Activated CD8-positive, alpha-beta T cell treated with anti-CD3 and anti-CD28 coated beads for 36 hours (primary cell): ENCODE measurements at regions of chr17 and their contacts with region 1.

Region 1: DNA sequence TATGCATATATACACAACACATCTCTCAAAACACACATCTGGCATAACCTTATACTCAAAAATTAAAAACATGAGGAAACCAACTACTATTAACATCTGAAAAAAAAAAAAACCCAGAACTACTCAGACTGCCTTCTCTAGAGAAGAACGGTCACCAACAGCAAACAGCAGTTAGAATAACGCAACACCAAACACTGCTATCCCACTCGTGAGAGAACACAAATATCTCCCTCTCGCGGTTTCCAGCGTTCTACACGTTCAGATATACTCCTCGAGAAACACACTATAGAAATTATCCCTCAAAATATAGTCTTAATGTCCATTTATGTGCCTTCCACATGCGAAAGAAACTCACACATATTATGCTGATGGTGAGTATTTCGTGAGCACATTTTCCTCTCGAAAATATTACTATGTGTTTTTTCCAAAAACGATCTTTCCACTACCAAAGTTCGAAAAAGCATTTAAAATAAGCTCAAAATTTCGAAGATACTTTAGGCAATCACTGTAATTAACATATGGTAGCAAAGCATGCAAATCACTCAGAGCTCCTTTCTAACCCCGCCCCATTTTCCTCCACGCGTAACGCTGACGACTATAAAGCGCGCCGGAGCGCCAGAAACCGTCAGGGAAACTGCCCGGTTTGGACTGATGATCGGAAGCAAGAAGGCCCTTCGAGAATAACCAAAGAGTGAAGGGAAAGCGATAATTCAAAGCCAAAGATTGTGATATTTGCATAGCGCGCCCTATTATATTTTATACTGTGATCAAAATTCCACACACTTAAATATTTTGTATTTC is 60.1 kb downstream of the TEX14 start:
- DNase-seq: peak; percentile 96
- ATAC-seq: peak; percentile 91
- H3K4me3 Mint-ChIP-seq: no peak overlapping the region
- H3K27ac Mint-ChIP-seq: no peak overlapping the region
- H3K4me1 Mint-ChIP-seq: peaks cover 3% of the 10 kb centered on the region
- H3K27me3 Mint-ChIP-seq: no peaks in the 10 kb centered on the region
- CTCF ChIP-seq: no peak

Region 2: GRCh38 chr17:58421711-58422110 is 210.0 kb before region 1 on chr17:
- CTCF ChIA-PET with region 1: no interaction called
- POLR2A ChIA-PET with region 1: no interaction called
- intact Hi-C with region 1: no loop called
- DNase-seq: no peak
- ATAC-seq: no peak
- H3K4me3 Mint-ChIP-seq: no peak overlapping the region
- H3K27ac Mint-ChIP-seq: no peak overlapping the region
- H3K4me1 Mint-ChIP-seq: peaks cover 14% of the 10 kb centered on the region
- H3K27me3 Mint-ChIP-seq: no peaks in the 10 kb centered on the region
- CTCF ChIP-seq: no peak

Region 3: GRCh38 chr17:58517734-58518609 is 113.8 kb before region 1 on chr17:
- CTCF ChIA-PET with region 1: interaction called, 12 read pairs
- POLR2A ChIA-PET with region 1: interaction called, 74 read pairs
- intact Hi-C with region 1: loop called (anchors 2 kb)
- DNase-seq: peak; percentile 100
- ATAC-seq: peak; percentile 83
- H3K4me3 Mint-ChIP-seq: peak overlapping the region; percentile 91
- H3K27ac Mint-ChIP-seq: peak overlapping the region; percentile 98
- H3K4me1 Mint-ChIP-seq: peaks cover 33% of the 10 kb centered on the region
- H3K27me3 Mint-ChIP-seq: no peaks in the 10 kb centered on the region
- CTCF ChIP-seq: no peak

Region 4: DNA sequence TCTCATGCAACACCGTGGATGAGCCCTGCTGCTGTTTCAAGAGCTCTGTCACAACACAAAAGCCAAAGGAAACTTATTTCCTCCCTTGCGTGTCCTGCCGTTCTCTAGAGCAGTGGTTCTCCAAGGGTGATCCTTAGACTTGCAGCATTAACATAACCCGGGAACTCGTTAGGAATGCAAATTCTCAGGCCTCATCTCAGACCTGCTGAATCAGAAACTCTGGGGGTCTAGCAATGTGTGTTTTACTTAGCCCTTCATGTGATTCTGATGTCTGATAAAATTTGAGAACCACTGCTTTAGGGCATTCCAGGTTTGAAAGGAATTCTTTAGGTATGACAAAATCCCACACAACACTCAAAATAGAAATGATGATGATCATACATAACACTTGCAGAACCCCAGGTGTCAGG is 65.9 kb before region 1 on chr17:
- CTCF ChIA-PET with region 1: no interaction called
- POLR2A ChIA-PET with region 1: interaction called, 12 read pairs
- intact Hi-C with region 1: no loop called
- DNase-seq: no peak
- ATAC-seq: no peak
- H3K4me3 Mint-ChIP-seq: no peak overlapping the region
- H3K27ac Mint-ChIP-seq: no peak overlapping the region
- H3K4me1 Mint-ChIP-seq: peaks cover 9% of the 10 kb centered on the region
- H3K27me3 Mint-ChIP-seq: no peaks in the 10 kb centered on the region
- CTCF ChIP-seq: no peak

Region 5: GRCh38 chr17:58595326-58595725 is 36.4 kb before region 1 on chr17:
- CTCF ChIA-PET with region 1: no interaction called
- POLR2A ChIA-PET with region 1: interaction called, 45 read pairs
- intact Hi-C with region 1: no loop called
- DNase-seq: peak; percentile 13
- ATAC-seq: no peak
- H3K4me3 Mint-ChIP-seq: no peak overlapping the region
- H3K27ac Mint-ChIP-seq: no peak overlapping the region
- H3K4me1 Mint-ChIP-seq: no peaks in the 10 kb centered on the region
- H3K27me3 Mint-ChIP-seq: no peaks in the 10 kb centered on the region
- CTCF ChIP-seq: no peak

Region 6: GRCh38 chr17:58643140-58643539 is 11.4 kb after region 1 on chr17:
- CTCF ChIA-PET with region 1: interaction called, 6 read pairs
- POLR2A ChIA-PET with region 1: interaction called, 85 read pairs
- intact Hi-C with region 1: no loop called
- DNase-seq: no peak
- ATAC-seq: no peak
- H3K4me3 Mint-ChIP-seq: no peak overlapping the region
- H3K27ac Mint-ChIP-seq: no peak overlapping the region
- H3K4me1 Mint-ChIP-seq: peaks cover 3% of the 10 kb centered on the region
- H3K27me3 Mint-ChIP-seq: no peaks in the 10 kb centered on the region
- CTCF ChIP-seq: no peak

Region 7: DNA sequence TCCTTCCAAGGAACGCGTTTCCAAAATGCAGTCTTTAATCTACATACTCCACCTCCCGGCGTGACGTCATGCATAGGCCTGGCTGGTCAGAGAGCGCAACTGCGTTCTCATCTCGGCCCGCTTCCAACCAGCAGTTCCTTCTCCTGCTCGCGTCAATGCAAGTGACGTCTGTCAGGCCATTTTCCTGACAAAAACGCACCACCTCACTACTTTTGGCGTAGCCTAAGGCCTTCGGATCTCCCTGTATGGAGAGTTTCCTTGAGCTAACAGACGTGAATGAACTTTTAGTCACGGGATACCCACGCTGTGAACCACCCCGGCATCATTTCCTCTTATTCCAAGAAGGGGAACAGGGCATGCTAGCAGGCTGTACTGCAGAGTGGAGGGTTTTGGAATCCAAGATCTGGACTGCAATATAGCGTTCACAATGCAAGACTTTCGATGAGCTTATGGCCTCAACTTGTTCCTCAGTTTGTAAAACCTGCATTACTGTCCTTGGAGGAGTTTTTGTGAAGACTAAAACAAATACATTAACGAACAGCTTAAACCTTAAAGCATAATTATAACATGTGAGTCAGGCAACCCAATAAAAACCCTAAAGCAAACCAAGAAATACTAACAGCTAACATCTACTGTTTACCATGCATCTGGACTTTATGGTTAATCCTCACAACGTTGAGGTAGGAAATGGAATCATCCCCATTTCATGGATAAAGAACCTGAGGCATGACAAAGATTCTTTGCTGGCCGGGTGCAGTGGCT is 35.3 kb after region 1 on chr17:
- CTCF ChIA-PET with region 1: no interaction called
- POLR2A ChIA-PET with region 1: interaction called, 235 read pairs
- intact Hi-C with region 1: no loop called
- DNase-seq: peak; percentile 59
- ATAC-seq: peak; percentile 37
- H3K4me3 Mint-ChIP-seq: no peak overlapping the region
- H3K27ac Mint-ChIP-seq: no peak overlapping the region
- H3K4me1 Mint-ChIP-seq: peaks cover 7% of the 10 kb centered on the region
- H3K27me3 Mint-ChIP-seq: peaks cover 10% of the 10 kb centered on the region
- CTCF ChIP-seq: no peak